PC-3 (cell line): ENCODE measurements at regions of chr5 and their contacts with region 1.

Region 1: DNA sequence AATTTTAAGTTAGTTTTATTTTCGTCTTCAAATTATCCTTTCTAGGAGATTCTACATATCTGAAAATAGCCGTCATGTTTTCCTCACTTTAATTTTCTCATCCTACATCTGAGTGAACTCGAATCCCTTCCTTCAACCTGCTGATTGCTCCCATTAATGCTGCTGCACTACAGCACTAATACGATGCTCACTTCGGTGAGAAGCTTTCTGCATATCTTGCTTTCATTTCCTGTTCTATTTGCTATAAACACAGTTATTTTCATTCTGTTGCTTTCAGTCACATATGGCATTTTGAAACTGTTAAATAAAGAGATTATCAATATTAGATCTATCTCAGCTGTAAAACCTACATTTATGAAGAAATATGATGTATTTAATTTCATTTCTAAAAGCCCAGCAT is 749.2 kb downstream of the EFNA5 start:
- DNase-seq: no peak
- ATAC-seq: no peak
- H3K4me3 ChIP-seq: no peak overlapping the region
- H3K27ac ChIP-seq: no peak overlapping the region
- H3K4me1 ChIP-seq: 0 out of 2 replicates have a peak, but pooled peaks cover 4% of the 10 kb centered on the region
- H3K27me3 ChIP-seq: no peaks in the 10 kb centered on the region
- CTCF ChIP-seq: no peak

Region 2: GRCh38 chr5:106940986-106941385 is 19.4 kb after region 1 on chr5:
- CTCF ChIA-PET with region 1: no interaction called
- POLR2A ChIA-PET with region 1: no interaction called
- intact Hi-C with region 1: loop called (anchors 2 kb)
- DNase-seq: peak; percentile 85
- ATAC-seq: peak; percentile 98
- H3K4me3 ChIP-seq: no peak overlapping the region
- H3K27ac ChIP-seq: peak overlapping the region; percentile 31
- H3K4me1 ChIP-seq: peaks cover 15% of the 10 kb centered on the region
- H3K27me3 ChIP-seq: no peaks in the 10 kb centered on the region
- CTCF ChIP-seq: no peak

Region 3: GRCh38 chr5:107449369-107449768 is 527.8 kb after region 1 on chr5:
- CTCF ChIA-PET with region 1: no interaction called
- POLR2A ChIA-PET with region 1: no interaction called
- intact Hi-C with region 1: no loop called
- DNase-seq: no peak
- ATAC-seq: no peak
- H3K4me3 ChIP-seq: no peak overlapping the region
- H3K27ac ChIP-seq: no peak overlapping the region
- H3K4me1 ChIP-seq: no peaks in the 10 kb centered on the region
- H3K27me3 ChIP-seq: no peaks in the 10 kb centered on the region
- CTCF ChIP-seq: no peak